ENCODE measurements at regions of chr5 and their contacts with region 1.

Region 1: GRCh38 chr5:67493676-67494075 is 297.1 kb upstream of the CD180 start:
- DNase-seq: peak; percentile 53 to 79
- ATAC-seq: peak; percentile 75 to 84
- H3K4me3 ChIP-seq: peak overlapping the region in 1 of 4 donors; percentile 6
- H3K27ac ChIP-seq: peak overlapping the region; percentile 78 to 94 (median 89)
- H3K4me1 ChIP-seq: peaks cover 16 to 21% of the 10 kb centered on the region in 2 donors
- H3K27me3 ChIP-seq: no peaks in the 10 kb centered on the region
- CTCF ChIP-seq: peak in 3 of 5 experiments; percentile 28 to 39 (median 38)
- POLR2A ChIP-seq: no peak

Region 2: GRCh38 chr5:67246108-67246507 is 247.6 kb before region 1 on chr5:
- in situ Hi-C with region 1: no loop called
- intact Hi-C with region 1: loop called (anchors 10 kb)
- DNase-seq: no peak
- ATAC-seq: peak; percentile 72 to 77
- H3K4me3 ChIP-seq: no peak overlapping the region
- H3K27ac ChIP-seq: peak overlapping the region in 3 of 4 donors; percentile 4 to 14 (median 14)
- H3K4me1 ChIP-seq: peaks cover 8 to 12% of the 10 kb centered on the region in 2 donors
- H3K27me3 ChIP-seq: no peaks in the 10 kb centered on the region
- CTCF ChIP-seq: peak; percentile 74 to 83 (median 81)
- POLR2A ChIP-seq: no peak

Region 3: DNA sequence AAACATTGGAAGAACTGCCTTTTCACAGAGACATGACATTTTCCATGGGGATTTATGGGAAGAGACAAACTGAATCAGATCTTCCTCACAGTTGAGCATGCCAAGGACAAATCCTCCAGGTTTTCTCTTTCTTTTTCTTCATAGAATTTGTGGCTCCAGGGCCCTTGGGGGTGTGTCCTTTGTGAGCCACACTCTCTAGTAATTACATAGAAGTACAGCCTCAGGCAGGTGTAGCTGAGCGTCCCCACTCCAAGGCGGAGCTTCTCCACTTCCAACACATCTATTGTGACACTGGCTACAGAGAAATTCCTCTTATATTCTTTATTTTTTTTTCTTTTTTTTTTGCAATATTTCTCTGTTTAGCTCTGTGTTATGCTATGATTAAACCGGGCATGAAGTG is 123.4 kb after region 1 on chr5:
- in situ Hi-C with region 1: no loop called
- intact Hi-C with region 1: no loop called
- DNase-seq: no peak
- ATAC-seq: no peak
- H3K4me3 ChIP-seq: no peak overlapping the region
- H3K27ac ChIP-seq: no peak overlapping the region
- H3K4me1 ChIP-seq: peaks cover 20 to 22% of the 10 kb centered on the region in 2 donors
- H3K27me3 ChIP-seq: no peaks in the 10 kb centered on the region
- CTCF ChIP-seq: no peak
- POLR2A ChIP-seq: no peak

Region 4: GRCh38 chr5:67677422-67677970 is 183.8 kb after region 1 on chr5:
- in situ Hi-C with region 1: loop called in 1 of 4 experiments (anchors 25 kb)
- intact Hi-C with region 1: loop called (anchors 1 kb)
- DNase-seq: peak; percentile 92 to 96
- ATAC-seq: peak; percentile 97 to 99
- H3K4me3 ChIP-seq: no peak overlapping the region
- H3K27ac ChIP-seq: peak overlapping the region; percentile 81 to 82 (median 81)
- H3K4me1 ChIP-seq: peaks cover 20 to 26% of the 10 kb centered on the region in 2 donors
- H3K27me3 ChIP-seq: no peaks in the 10 kb centered on the region
- CTCF ChIP-seq: no peak
- POLR2A ChIP-seq: peak in 1 of 2 donors; percentile 30

Region 5: GRCh38 chr5:67773411-67774266 is 280.0 kb after region 1 on chr5:
- in situ Hi-C with region 1: no loop called
- intact Hi-C with region 1: loop called (anchors 5 kb)
- DNase-seq: no peak
- ATAC-seq: no peak
- H3K4me3 ChIP-seq: no peak overlapping the region
- H3K27ac ChIP-seq: peak overlapping the region; percentile 74 to 82 (median 78)
- H3K4me1 ChIP-seq: peaks cover 30 to 32% of the 10 kb centered on the region in 2 donors
- H3K27me3 ChIP-seq: no peaks in the 10 kb centered on the region
- CTCF ChIP-seq: no peak
- POLR2A ChIP-seq: no peak

Region 6: GRCh38 chr5:67815455-67816391 is 322.0 kb after region 1 on chr5:
- in situ Hi-C with region 1: loop called in 1 of 4 experiments (anchors 25 kb)
- intact Hi-C with region 1: no loop called
- DNase-seq: peak; percentile 28 to 35
- ATAC-seq: peak; percentile 86 to 90
- H3K4me3 ChIP-seq: no peak overlapping the region
- H3K27ac ChIP-seq: peak overlapping the region; percentile 27 to 55 (median 50)
- H3K4me1 ChIP-seq: peaks cover 7 to 22% of the 10 kb centered on the region in 2 donors
- H3K27me3 ChIP-seq: no peaks in the 10 kb centered on the region
- CTCF ChIP-seq: no peak
- POLR2A ChIP-seq: no peak

Region 7: GRCh38 chr5:68215208-68215897 is 721.7 kb after region 1 on chr5 and contains the start of gene PIK3R1:
- in situ Hi-C with region 1: loop called in 1 of 4 experiments (anchors 25 kb)
- intact Hi-C with region 1: loop called (anchors 5 kb)
- DNase-seq: peak; percentile 92 to 95
- ATAC-seq: peak; percentile 81 to 84
- H3K4me3 ChIP-seq: peak within 1 kb of the TSS; percentile 85 to 100 (median 92)
- H3K27ac ChIP-seq: peak within 1 kb of the TSS; percentile 94 to 98 (median 96)
- H3K4me1 ChIP-seq: peaks cover 21 to 28% of the 10 kb centered on the region in 2 donors
- H3K27me3 ChIP-seq: no peaks in the 10 kb centered on the region
- CTCF ChIP-seq: peak; percentile 55 to 67 (median 55)
- POLR2A ChIP-seq: peak; percentile 98 to 99
- total RNA-seq, gene PIK3R1: 87.2 to 129 (median 100) TPM

Region 8: DNA sequence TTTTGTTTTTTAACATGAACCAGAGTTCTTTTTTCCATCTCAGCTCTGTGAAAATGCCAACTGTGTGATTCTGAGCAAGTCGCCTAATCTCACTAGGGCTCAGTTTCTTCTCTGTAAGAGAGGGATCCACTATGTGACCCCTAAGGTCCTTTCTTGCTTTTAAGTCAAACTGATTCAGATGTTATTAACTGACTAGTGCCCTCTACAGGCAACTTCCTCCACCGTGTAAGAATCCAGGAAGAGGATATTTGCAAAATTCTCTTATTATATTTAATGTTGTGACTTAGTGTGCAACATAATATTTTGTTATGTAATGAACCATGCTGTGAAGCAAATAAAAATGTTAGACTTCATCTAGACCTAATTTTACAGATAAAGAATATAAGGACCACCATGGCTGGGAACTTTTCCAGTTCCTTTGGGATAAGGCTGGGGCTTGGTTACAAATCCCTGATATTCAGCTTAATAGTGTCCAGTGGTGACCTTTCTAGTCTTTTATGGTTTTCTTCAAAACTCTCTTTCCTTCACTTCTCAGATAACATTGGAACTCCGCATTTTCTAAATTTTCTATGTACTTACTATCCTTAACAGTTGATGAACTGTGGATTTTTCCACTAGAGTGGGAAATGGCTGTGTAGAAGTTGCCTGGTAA is 966.6 kb after region 1 on chr5:
- in situ Hi-C with region 1: loop called in 1 of 4 experiments (anchors 25 kb)
- intact Hi-C with region 1: no loop called
- DNase-seq: no peak
- ATAC-seq: peak in 1 of 2 donors; percentile 63
- H3K4me3 ChIP-seq: no peak overlapping the region
- H3K27ac ChIP-seq: no peak overlapping the region
- H3K4me1 ChIP-seq: peaks cover 0 to 16% of the 10 kb centered on the region in 2 donors
- H3K27me3 ChIP-seq: no peaks in the 10 kb centered on the region
- CTCF ChIP-seq: peak; percentile 52 to 71 (median 62)
- POLR2A ChIP-seq: no peak

Measured in gastrocnemius medialis (tissue), 4 donors.